ENCODE measurements at regions of chr3 and their contacts with region 1.

Region 1: DNA sequence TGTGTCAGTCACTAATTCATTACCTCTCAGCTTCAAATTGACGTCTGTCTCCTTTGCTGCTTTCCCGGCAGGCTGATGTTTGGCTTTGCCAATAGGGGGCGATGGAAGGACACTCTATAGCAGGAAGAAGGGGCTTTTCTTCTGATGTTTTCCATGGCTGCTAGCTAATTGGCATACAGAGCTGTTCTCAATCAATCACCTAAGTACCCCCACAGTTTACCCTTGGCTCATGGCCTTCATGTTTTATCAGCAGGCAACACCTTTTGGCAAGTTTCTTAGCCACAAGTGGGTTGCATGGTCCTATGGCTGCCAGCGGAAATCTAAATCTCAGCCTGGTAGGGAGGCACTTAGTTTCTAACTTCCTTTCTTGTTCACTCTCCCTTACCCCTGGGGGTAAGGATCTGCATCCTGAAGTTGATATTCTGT is 45.0 kb downstream of the ESYT3 start:
- DNase-seq: no peak
- ATAC-seq: peak; percentile 81
- H3K4me3 ChIP-seq: no peak overlapping the region
- H3K27ac ChIP-seq: no peak overlapping the region
- H3K4me1 ChIP-seq: no peaks in the 10 kb centered on the region
- H3K27me3 ChIP-seq: 0 out of 4 replicates have a peak, but pooled peaks cover 0 to 2% of the 10 kb centered on the region in 2 experiments
- CTCF ChIP-seq: peak; percentile 80 to 82 (median 81)
- EP300 ChIP-seq: no peak
- POLR2A ChIP-seq: no peak
- RAD21 ChIP-seq: peak; percentile 76

Region 2: DNA sequence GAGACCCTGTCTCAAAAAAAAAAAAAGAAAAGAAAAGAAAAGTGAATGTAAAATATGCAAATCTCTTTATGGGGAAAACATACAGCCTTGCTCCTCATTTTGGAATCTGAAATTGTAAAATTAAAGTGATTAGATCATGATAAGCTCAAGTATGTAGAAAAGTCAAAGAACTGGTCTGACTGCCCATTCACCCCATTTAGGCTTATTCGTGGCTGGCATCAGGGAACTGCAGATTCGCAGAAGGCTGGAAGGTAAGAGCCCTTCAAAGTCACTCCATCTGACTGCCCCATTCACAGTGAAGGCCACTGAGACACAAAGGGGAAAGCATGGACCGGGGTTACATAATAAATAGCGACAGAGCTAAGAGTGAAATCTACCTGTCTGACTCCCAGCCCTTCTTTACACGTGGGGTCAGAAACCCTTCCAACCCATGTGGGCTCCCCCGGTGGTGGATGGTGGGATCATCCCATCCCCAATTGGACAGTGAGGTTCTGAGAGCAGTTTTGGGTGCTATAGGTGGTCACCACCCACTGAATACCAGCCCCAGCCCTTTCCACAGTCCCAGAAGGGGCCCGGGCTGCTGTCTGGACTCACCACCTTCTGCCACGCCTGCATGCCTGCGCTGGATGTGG is 382.2 kb before region 1 on chr3:
- CTCF ChIA-PET with region 1: no interaction called
- POLR2A ChIA-PET with region 1: no interaction called
- RAD21 ChIA-PET with region 1: no interaction called
- SMC1A ChIA-PET with region 1: no interaction called
- in situ Hi-C with region 1: no loop called
- intact Hi-C with region 1: no loop called
- DNase-seq: no peak
- ATAC-seq: peak; percentile 80
- H3K4me3 ChIP-seq: no peak overlapping the region
- H3K27ac ChIP-seq: no peak overlapping the region
- H3K4me1 ChIP-seq: no peaks in the 10 kb centered on the region
- H3K27me3 ChIP-seq: no peaks in the 10 kb centered on the region; a peak in 1 of 4 replicates
- CTCF ChIP-seq: peak in 2 of 3 experiments; percentile 21 to 50; a peak in 2 of 6 replicates
- EP300 ChIP-seq: no peak
- POLR2A ChIP-seq: no peak
- RAD21 ChIP-seq: no peak

Region 3: GRCh38 chr3:138434276-138434874 is 45.1 kb before region 1 on chr3 and contains the start of gene ESYT3:
- CTCF ChIA-PET with region 1: no interaction called
- POLR2A ChIA-PET with region 1: no interaction called
- RAD21 ChIA-PET with region 1: no interaction called
- SMC1A ChIA-PET with region 1: no interaction called
- in situ Hi-C with region 1: no loop called
- intact Hi-C with region 1: no loop called
- DNase-seq: no peak
- ATAC-seq: peak; percentile 60
- H3K4me3 ChIP-seq: no peak within 1 kb of the TSS
- H3K27ac ChIP-seq: no peak within 1 kb of the TSS
- H3K4me1 ChIP-seq: no peaks in the 10 kb centered on the region
- H3K27me3 ChIP-seq: peaks cover 14 to 15% of the 10 kb centered on the region in 2 experiments
- CTCF ChIP-seq: no peak
- EP300 ChIP-seq: no peak
- POLR2A ChIP-seq: peak; percentile 29; the same call in 1 of the 2 replicates
- RAD21 ChIP-seq: no peak
- polyA plus RNA-seq, gene ESYT3: not detected

Region 4: DNA sequence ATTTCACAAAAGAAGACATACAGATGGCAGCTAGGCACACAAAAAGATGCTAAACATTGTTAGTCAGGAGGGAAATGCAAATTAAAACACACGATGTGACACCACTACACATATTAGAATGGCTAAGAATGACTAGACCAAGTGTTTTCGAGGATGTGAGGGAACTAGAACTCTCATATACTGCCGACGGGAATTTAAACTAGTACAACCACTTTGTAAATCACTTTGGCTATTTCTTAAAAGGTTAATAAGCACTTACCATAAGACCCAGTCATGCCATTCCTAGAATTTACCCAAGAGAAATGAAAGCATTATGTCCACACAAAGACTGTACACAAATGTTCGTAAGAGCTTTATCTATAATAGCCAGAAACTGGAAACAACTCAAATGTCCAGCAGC is 109.0 kb after region 1 on chr3:
- CTCF ChIA-PET with region 1: interaction called, 26 read pairs
- POLR2A ChIA-PET with region 1: no interaction called
- RAD21 ChIA-PET with region 1: interaction called, 20 read pairs
- SMC1A ChIA-PET with region 1: interaction called, 19 read pairs
- in situ Hi-C with region 1: no loop called
- intact Hi-C with region 1: no loop called
- DNase-seq: no peak
- ATAC-seq: no peak
- H3K4me3 ChIP-seq: no peak overlapping the region
- H3K27ac ChIP-seq: no peak overlapping the region
- H3K4me1 ChIP-seq: no peaks in the 10 kb centered on the region; the same call in 1 of the 2 replicates
- H3K27me3 ChIP-seq: no peaks in the 10 kb centered on the region
- CTCF ChIP-seq: no peak
- EP300 ChIP-seq: no peak
- POLR2A ChIP-seq: no peak
- RAD21 ChIP-seq: no peak

Region 5: GRCh38 chr3:138694287-138695007 is 215.0 kb after region 1 on chr3:
- CTCF ChIA-PET with region 1: interaction called, 6 read pairs
- POLR2A ChIA-PET with region 1: no interaction called
- RAD21 ChIA-PET with region 1: interaction called, 3 read pairs
- SMC1A ChIA-PET with region 1: interaction called, 4 read pairs
- in situ Hi-C with region 1: no loop called
- intact Hi-C with region 1: loop called (anchors 5 kb)
- DNase-seq: no peak
- ATAC-seq: no peak
- H3K4me3 ChIP-seq: no peak overlapping the region
- H3K27ac ChIP-seq: no peak overlapping the region
- H3K4me1 ChIP-seq: no peaks in the 10 kb centered on the region
- H3K27me3 ChIP-seq: no peaks in the 10 kb centered on the region
- CTCF ChIP-seq: no peak
- EP300 ChIP-seq: no peak
- POLR2A ChIP-seq: no peak
- RAD21 ChIP-seq: no peak

Measured in GM12878 (cell line).